GM12878 (cell line): ENCODE measurements at regions of chr1 and their contacts with region 1.

Region 1: GRCh38 chr1:84959294-84959693 is 37.6 kb downstream of the MCOLN2 start:
- DNase-seq: peak; percentile 68
- ATAC-seq: peak; percentile 94
- H3K4me3 ChIP-seq: no peak overlapping the region
- H3K27ac ChIP-seq: peak overlapping the region; percentile 62
- H3K4me1 ChIP-seq: peaks cover 10% of the 10 kb centered on the region
- H3K27me3 ChIP-seq: no peaks in the 10 kb centered on the region
- CTCF ChIP-seq: no peak
- EP300 ChIP-seq: peak; percentile 85 to 91
- POLR2A ChIP-seq: 0 out of 2 replicates have a peak, but pooled peaks have one; percentile 33
- RAD21 ChIP-seq: peak; percentile 21; the same call in 1 of the 2 replicates

Region 2: GRCh38 chr1:84973498-84974334 is 14.4 kb after region 1 on chr1:
- CTCF ChIA-PET with region 1: interaction called, 8 read pairs
- POLR2A ChIA-PET with region 1: interaction called, 20 read pairs
- RAD21 ChIA-PET with region 1: interaction called, 46 read pairs
- SMC1A ChIA-PET with region 1: interaction called, 76 read pairs
- in situ Hi-C with region 1: no loop called
- intact Hi-C with region 1: loop called (anchors 1 kb)
- DNase-seq: no peak
- ATAC-seq: peak; percentile 54
- H3K4me3 ChIP-seq: peak overlapping the region; percentile 60
- H3K27ac ChIP-seq: peak overlapping the region; percentile 85
- H3K4me1 ChIP-seq: peaks cover 56% of the 10 kb centered on the region
- H3K27me3 ChIP-seq: no peaks in the 10 kb centered on the region
- CTCF ChIP-seq: peak in 1 of 3 experiments; percentile 31; a peak in 2 of 6 replicates
- EP300 ChIP-seq: no peak
- POLR2A ChIP-seq: no peak
- RAD21 ChIP-seq: peak; percentile 41; the same call in 1 of the 2 replicates

Region 3: GRCh38 chr1:85027242-85027983 is 68.1 kb after region 1 on chr1:
- CTCF ChIA-PET with region 1: interaction called, 32 read pairs
- POLR2A ChIA-PET with region 1: interaction called, 4 read pairs
- RAD21 ChIA-PET with region 1: interaction called, 34 read pairs
- SMC1A ChIA-PET with region 1: interaction called, 26 read pairs
- in situ Hi-C with region 1: no loop called
- intact Hi-C with region 1: no loop called
- DNase-seq: no peak
- ATAC-seq: peak; percentile 96
- H3K4me3 ChIP-seq: no peak overlapping the region
- H3K27ac ChIP-seq: no peak overlapping the region
- H3K4me1 ChIP-seq: no peaks in the 10 kb centered on the region
- H3K27me3 ChIP-seq: no peaks in the 10 kb centered on the region
- CTCF ChIP-seq: peak; percentile 31 to 62 (median 33); a peak in 4 of 6 replicates
- EP300 ChIP-seq: no peak
- POLR2A ChIP-seq: no peak
- RAD21 ChIP-seq: peak; percentile 72